Endothelial cell of umbilical vein (primary cell): ENCODE measurements at regions of chr11 and their contacts with region 1.

Region 1: DNA sequence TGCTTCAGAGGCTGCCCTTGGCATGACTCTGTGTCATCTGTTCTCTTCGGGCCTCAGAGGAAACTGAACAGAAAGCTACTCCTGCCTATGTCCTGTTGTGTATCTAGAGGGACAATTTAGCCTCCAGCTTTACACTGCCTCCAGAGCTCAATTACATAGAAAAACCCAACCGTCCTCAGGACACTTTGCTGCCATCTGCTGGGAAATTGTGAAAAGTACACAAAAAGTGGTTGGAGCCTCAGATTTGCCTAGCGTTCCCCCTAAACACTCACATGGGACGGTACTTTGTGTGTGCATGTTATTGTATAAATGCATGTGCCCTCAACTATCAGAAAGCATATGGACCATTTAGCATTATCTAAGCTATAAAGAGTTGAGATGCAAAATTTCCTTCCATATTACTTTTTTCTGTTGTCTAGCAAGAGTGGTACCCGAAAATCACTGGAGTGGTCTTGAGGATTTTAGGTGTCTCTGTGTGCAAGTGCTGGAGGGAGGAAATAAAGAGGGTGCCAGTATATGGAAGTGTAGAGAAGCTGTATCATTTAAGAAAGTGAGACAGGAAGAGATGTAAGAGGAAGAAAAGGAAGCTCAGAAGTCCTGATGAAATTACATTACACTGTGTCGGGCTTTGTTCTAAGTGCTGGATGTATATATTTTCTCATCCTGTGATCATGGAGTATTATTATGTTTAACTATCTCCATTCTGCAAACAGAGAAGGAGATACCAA is 8.7 kb upstream of the MS4A4E start:
- DNase-seq: peak; percentile 89
- H3K4me3 ChIP-seq: no peak overlapping the region
- H3K27ac ChIP-seq: no peak overlapping the region
- H3K4me1 ChIP-seq: peaks cover 22% of the 10 kb centered on the region
- H3K27me3 ChIP-seq: peaks cover 0 to 3% of the 10 kb centered on the region in 2 experiments
- CTCF ChIP-seq: peak; percentile 43 to 58
- POLR2A ChIP-seq: no peak

Region 2: GRCh38 chr11:59822989-59823566 is 428.6 kb before region 1 on chr11:
- CTCF ChIA-PET with region 1: interaction called, 22 read pairs
- POLR2A ChIA-PET with region 1: no interaction called
- dilution Hi-C with region 1: no loop called
- intact Hi-C with region 1: loop called (anchors 1 kb)
- DNase-seq: peak; percentile 87
- H3K4me3 ChIP-seq: no peak overlapping the region
- H3K27ac ChIP-seq: no peak overlapping the region
- H3K4me1 ChIP-seq: no peaks in the 10 kb centered on the region
- H3K27me3 ChIP-seq: no peaks in the 10 kb centered on the region
- CTCF ChIP-seq: peak; percentile 48 to 67
- POLR2A ChIP-seq: no peak

Region 3: GRCh38 chr11:60159868-60160267 is 91.8 kb before region 1 on chr11:
- CTCF ChIA-PET with region 1: interaction called, 37 read pairs
- POLR2A ChIA-PET with region 1: no interaction called
- dilution Hi-C with region 1: no loop called
- intact Hi-C with region 1: no loop called
- DNase-seq: peak; percentile 93
- H3K4me3 ChIP-seq: no peak overlapping the region
- H3K27ac ChIP-seq: peak overlapping the region; percentile 96
- H3K4me1 ChIP-seq: peaks cover 40% of the 10 kb centered on the region
- H3K27me3 ChIP-seq: no peaks in the 10 kb centered on the region
- CTCF ChIP-seq: no peak
- POLR2A ChIP-seq: peak; percentile 76

Region 4: GRCh38 chr11:60193687-60194433 is 57.8 kb before region 1 on chr11:
- CTCF ChIA-PET with region 1: interaction called, 88 read pairs
- POLR2A ChIA-PET with region 1: no interaction called
- dilution Hi-C with region 1: no loop called
- intact Hi-C with region 1: loop called (anchors 1 kb)
- DNase-seq: peak; percentile 98
- H3K4me3 ChIP-seq: no peak overlapping the region
- H3K27ac ChIP-seq: peak overlapping the region; percentile 92
- H3K4me1 ChIP-seq: peaks cover 37% of the 10 kb centered on the region
- H3K27me3 ChIP-seq: no peaks in the 10 kb centered on the region
- CTCF ChIP-seq: peak; percentile 97
- POLR2A ChIP-seq: peak; percentile 21

Region 5: DNA sequence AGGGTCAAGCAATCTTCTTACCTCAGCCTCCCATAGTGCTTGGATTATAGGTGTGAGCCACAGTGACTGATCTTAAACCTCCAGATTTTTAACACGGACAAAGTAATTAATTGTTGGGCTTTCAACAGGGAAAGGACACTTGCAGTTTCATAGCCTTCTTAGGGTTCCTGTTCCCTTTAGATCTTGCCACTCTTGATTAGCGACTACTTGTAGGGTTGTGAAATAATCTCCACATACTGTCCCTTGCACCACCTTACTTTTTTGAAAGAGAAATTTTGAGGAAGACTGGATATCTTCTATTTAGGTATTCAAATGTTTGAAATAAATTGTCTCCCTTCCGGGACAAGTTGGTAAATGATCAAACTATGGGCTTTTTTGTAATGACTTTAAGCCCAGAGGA is 16.3 kb before region 1 on chr11:
- CTCF ChIA-PET with region 1: interaction called, 27 read pairs
- POLR2A ChIA-PET with region 1: no interaction called
- dilution Hi-C with region 1: no loop called
- intact Hi-C with region 1: no loop called
- DNase-seq: no peak
- H3K4me3 ChIP-seq: no peak overlapping the region
- H3K27ac ChIP-seq: no peak overlapping the region
- H3K4me1 ChIP-seq: no peaks in the 10 kb centered on the region
- H3K27me3 ChIP-seq: no peaks in the 10 kb centered on the region
- CTCF ChIP-seq: no peak
- POLR2A ChIP-seq: no peak